ENCODE measurements at regions of chr2 and their contacts with region 1.

Region 1: GRCh38 chr2:227447606-227448005 is 24.4 kb upstream of the AGFG1 start:
- H3K4me3 ChIP-seq: no peak overlapping the region
- H3K27ac ChIP-seq: no peak overlapping the region
- H3K4me1 ChIP-seq: no peaks in the 10 kb centered on the region
- CTCF ChIP-seq: no peak

Region 2: GRCh38 chr2:227436436-227437174 is 11.0 kb before region 1 on chr2:
- CTCF ChIA-PET with region 1: no interaction called
- POLR2A ChIA-PET with region 1: no interaction called
- H3K4me3 ChIP-seq: no peak overlapping the region
- H3K27ac ChIP-seq: no peak overlapping the region
- H3K4me1 ChIP-seq: no peaks in the 10 kb centered on the region
- CTCF ChIP-seq: no peak

Region 3: DNA sequence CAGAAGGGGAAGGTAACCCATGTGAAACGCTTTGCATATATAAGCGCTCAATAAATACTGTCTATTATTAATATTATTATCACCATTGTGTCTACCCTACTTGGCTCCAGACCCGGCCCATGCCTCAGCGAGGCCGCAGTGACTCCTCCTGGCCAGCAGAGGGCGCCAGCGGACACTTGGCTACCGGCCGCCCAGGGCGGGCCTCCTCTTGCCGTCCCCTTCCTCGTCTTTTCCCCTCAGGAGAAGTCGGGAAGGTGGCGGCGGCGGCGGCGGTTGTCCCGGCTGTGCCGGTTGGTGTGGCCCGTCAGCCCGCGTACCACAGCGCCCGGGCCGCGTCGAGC is 24.3 kb after region 1 on chr2 and contains the start of gene AGFG1:
- CTCF ChIA-PET with region 1: interaction called, 11 read pairs
- POLR2A ChIA-PET with region 1: no interaction called
- H3K4me3 ChIP-seq: peak within 1 kb of the TSS; percentile 90
- H3K27ac ChIP-seq: peak within 1 kb of the TSS; percentile 75
- H3K4me1 ChIP-seq: peaks cover 10% of the 10 kb centered on the region
- CTCF ChIP-seq: peak; percentile 89

Region 4: DNA sequence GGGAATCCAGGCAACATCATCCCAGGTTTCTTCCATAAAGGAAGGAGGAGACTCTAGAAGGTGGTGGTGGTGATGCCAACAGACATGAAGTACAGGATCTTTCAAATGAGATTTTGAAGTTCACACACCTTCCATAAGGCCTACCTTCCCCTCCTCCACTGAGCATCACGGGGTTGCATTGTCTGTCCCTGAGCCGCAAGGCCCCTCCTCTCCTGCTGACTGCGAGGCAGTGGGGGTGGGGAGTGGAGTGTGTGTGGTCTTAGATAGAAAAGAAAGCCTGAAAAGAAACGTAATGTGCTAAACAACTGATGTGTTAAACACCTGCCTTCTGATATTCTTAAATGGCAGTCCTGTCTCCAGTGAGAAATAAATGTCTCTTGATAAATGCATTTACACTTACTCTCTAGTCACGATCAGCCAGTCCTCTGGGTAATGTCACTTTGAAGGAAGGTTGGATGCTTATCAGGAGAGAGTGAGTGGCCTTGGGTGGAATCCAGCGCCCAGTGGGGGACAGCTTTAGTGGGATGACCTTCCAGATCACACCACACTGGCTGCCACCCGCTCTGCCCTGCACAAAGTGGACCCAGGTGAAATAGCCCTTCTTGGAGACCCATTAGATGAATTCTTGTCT is 213.5 kb after region 1 on chr2:
- CTCF ChIA-PET with region 1: no interaction called
- POLR2A ChIA-PET with region 1: no interaction called
- H3K4me3 ChIP-seq: no peak overlapping the region
- H3K27ac ChIP-seq: no peak overlapping the region
- H3K4me1 ChIP-seq: no peaks in the 10 kb centered on the region
- CTCF ChIP-seq: no peak

Region 5: GRCh38 chr2:227728035-227728434 is 280.4 kb after region 1 on chr2 and contains the start of gene SCYGR7:
- CTCF ChIA-PET with region 1: no interaction called
- POLR2A ChIA-PET with region 1: no interaction called
- H3K4me3 ChIP-seq: no peak within 1 kb of the TSS
- H3K27ac ChIP-seq: no peak within 1 kb of the TSS
- H3K4me1 ChIP-seq: no peaks in the 10 kb centered on the region
- CTCF ChIP-seq: no peak